Gastrocnemius medialis (tissue), 4 donors: ENCODE measurements at regions of chr12 and their contacts with region 1.

Region 1: GRCh38 chr12:104286538-104287482 is 16.7 kb upstream of the EID3 start:
- DNase-seq: peak; percentile 88 to 93
- ATAC-seq: peak; percentile 83 to 84
- H3K4me3 ChIP-seq: peak overlapping the region; percentile 66 to 86 (median 80)
- H3K27ac ChIP-seq: peak overlapping the region; percentile 93 to 99 (median 96)
- H3K4me1 ChIP-seq: peaks cover 24% of the 10 kb centered on the region in 2 donors
- H3K27me3 ChIP-seq: no peaks in the 10 kb centered on the region
- CTCF ChIP-seq: no peak
- POLR2A ChIP-seq: peak; percentile 87 to 88

Region 2: DNA sequence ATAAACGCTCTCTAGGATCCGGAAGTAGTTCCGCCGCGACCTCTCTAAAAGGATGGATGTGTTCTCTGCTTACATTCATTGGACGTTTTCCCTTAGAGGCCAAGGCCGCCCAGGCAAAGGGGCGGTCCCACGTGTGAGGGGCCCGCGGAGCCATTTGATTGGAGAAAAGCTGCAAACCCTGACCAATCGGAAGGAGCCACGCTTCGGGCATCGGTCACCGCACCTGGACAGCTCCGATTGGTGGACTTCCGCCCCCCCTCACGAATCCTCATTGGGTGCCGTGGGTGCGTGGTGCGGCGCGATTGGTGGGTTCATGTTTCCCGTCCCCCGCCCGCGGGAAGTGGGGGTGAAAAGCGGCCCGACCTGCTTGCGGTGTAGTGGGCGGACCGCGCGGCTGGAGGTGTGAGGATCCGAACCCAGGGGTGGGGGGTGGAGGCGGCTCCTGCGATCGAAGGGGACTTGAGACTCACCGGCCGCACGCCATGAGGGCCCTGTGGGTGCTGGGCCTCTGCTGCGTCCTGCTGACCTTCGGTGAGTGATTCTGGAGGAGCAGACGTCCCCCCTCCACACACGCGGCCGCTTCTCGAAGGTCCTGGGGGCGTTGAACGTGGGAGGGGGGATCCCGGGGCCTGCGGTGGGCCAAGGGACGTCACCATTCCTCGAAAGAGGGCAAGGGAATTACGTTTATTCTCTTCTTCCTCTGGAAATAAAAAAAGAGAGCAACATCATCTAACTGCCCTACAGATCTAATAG is 356.6 kb before region 1 on chr12 and contains the start of gene HSP90B1:
- in situ Hi-C with region 1: loop called in 1 of 4 experiments (anchors 25 kb)
- intact Hi-C with region 1: loop called (anchors 5 kb)
- DNase-seq: peak; percentile 100
- ATAC-seq: peak; percentile 90 to 93
- H3K4me3 ChIP-seq: peak within 1 kb of the TSS; percentile 79 to 91 (median 88)
- H3K27ac ChIP-seq: peak within 1 kb of the TSS; percentile 91 to 97 (median 94)
- H3K4me1 ChIP-seq: peaks cover 49 to 50% of the 10 kb centered on the region in 2 donors
- H3K27me3 ChIP-seq: no peaks in the 10 kb centered on the region
- CTCF ChIP-seq: no peak
- POLR2A ChIP-seq: peak; percentile 90 to 97
- total RNA-seq, gene HSP90B1: 60.3 to 94.8 (median 79.3) TPM

Region 3: GRCh38 chr12:104064031-104064822 is 222.6 kb before region 1 on chr12 and contains the start of gene HCFC2:
- in situ Hi-C with region 1: no loop called
- intact Hi-C with region 1: loop called (anchors 5 kb)
- DNase-seq: peak; percentile 87 to 89
- ATAC-seq: peak; percentile 95 to 96
- H3K4me3 ChIP-seq: peak within 1 kb of the TSS; percentile 73 to 98 (median 80)
- H3K27ac ChIP-seq: peak within 1 kb of the TSS; percentile 91 to 97 (median 96)
- H3K4me1 ChIP-seq: peaks cover 17 to 20% of the 10 kb centered on the region in 2 donors
- H3K27me3 ChIP-seq: no peaks in the 10 kb centered on the region
- CTCF ChIP-seq: peak in 1 of 5 experiments; percentile 9
- POLR2A ChIP-seq: peak in 1 of 2 donors; percentile 89
- total RNA-seq, gene HCFC2: 19.4 to 27.7 (median 21.8) TPM

Region 4: DNA sequence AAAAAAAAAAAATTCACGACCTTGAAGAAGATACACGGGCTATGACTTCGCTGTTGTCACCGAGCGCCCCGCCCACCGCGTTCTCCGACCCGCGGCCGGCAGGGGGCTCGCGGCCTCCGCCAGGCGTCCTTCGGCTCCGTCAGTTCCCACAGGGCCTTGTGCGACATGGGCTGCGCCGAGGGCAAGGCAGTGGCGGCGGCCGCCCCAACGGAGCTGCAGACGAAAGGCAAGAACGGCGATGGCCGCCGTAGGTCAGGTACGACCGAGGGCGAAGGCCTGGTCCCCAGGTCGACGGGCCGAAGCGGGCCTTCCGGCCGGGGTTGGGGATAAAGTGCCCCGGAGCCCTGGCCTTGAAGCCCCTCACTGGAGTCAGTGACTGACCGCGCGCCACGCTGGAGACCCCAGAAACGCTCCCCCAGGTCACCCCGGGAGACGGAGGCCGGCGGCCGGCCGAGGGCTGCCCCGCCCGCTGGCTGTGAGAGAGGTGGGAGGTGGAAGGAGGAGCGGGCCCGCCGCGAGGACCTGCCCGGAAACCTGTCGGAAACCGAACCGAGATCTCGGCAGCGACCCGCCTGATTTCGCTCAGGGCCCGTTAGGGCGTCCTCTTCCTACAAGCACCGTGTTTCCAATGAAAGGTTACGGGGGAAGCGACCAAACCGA is 71.0 kb before region 1 on chr12 and contains the start of gene TXNRD1:
- in situ Hi-C with region 1: loop called in 1 of 4 experiments (anchors 10 kb)
- intact Hi-C with region 1: loop called (anchors 1 kb)
- DNase-seq: peak; percentile 58 to 77
- ATAC-seq: peak; percentile 83 to 95
- H3K4me3 ChIP-seq: peak within 1 kb of the TSS; percentile 67 to 73 (median 70)
- H3K27ac ChIP-seq: peak within 1 kb of the TSS; percentile 57 to 72 (median 64)
- H3K4me1 ChIP-seq: peaks cover 10 to 16% of the 10 kb centered on the region in 2 donors
- H3K27me3 ChIP-seq: no peaks in the 10 kb centered on the region
- CTCF ChIP-seq: peak; percentile 75 to 91 (median 81)
- POLR2A ChIP-seq: no peak
- total RNA-seq, gene TXNRD1: 96.6 to 139 (median 118) TPM

Region 5: GRCh38 chr12:104858611-104859543 is 572.1 kb after region 1 on chr12:
- in situ Hi-C with region 1: no loop called
- intact Hi-C with region 1: loop called (anchors 5 kb)
- DNase-seq: no peak
- ATAC-seq: peak; percentile 93 to 96
- H3K4me3 ChIP-seq: no peak overlapping the region
- H3K27ac ChIP-seq: peak overlapping the region; percentile 52 to 65 (median 58)
- H3K4me1 ChIP-seq: peaks cover 0 to 5% of the 10 kb centered on the region in 2 donors
- H3K27me3 ChIP-seq: no peaks in the 10 kb centered on the region
- CTCF ChIP-seq: no peak
- POLR2A ChIP-seq: no peak